CD4-positive, alpha-beta T cell (primary cell): ENCODE measurements at regions of chr5 and their contacts with region 1.

Region 1: DNA sequence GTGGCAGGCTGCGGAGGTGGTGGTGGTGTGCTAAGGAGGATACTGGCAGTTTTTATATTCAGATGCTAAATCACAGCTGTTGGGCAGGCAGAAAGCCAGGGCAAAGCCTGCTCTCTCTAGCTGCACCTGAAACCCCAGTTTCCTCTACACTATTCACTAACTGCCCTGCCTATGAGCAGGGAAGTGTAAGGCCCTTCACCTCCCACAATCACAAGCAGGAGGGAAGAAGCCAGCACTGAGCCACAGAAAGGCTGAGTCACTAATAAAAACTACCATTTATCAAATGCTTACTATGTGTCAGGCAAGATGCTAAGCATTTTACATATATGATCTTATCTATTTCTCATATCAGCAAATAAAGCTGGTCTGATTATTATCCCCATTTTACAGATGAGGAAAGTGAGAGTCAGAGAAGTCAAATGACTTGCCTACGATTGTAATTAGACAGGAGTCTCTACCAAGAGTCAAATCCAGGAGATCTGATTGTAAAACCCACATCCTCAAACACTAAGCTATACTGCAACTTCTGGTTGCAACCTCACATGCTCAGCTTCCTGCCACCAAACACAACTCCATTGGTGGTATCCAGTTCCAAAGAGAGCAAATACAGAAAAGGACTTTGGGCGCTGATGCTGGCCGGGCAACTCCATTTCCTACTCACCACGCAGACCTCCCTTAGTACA is 17.7 kb upstream of the IL6ST start:
- DNase-seq: peak in 8 of 14 experiments; percentile 13 to 82 (median 49)
- ATAC-seq: peak; percentile 94
- H3K4me3 ChIP-seq: no peak overlapping the region
- H3K4me3 Mint-ChIP-seq: peak overlapping the region; percentile 16
- H3K27ac ChIP-seq: peak overlapping the region; percentile 29 to 53
- H3K27ac Mint-ChIP-seq: peak overlapping the region; percentile 75
- H3K4me1 ChIP-seq: peaks cover 33% of the 10 kb centered on the region
- H3K4me1 Mint-ChIP-seq: peaks cover 43% of the 10 kb centered on the region
- H3K27me3 ChIP-seq: no peaks in the 10 kb centered on the region
- H3K27me3 Mint-ChIP-seq: no peaks in the 10 kb centered on the region
- CTCF ChIP-seq: no peak

Region 2: DNA sequence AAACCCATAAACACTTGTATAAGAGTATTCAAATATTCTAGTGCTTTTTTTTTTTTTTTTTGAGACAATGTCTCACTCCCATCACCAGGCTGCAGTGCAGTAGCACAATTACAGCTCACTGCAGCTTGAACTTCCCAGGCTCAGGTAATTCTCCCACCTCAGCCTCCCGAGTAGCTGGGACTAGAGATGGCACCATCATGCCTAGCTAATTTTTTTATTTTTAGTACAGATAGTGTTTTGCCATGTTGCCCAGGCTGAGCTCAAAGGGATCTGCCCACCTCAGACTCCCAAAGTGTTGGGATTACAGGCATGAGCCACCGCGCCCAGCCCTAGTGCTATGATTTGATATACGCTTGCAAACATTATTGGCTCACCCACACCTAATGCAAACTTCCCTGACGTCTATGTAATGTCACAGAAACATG is 29.5 kb before region 1 on chr5:
- CTCF ChIA-PET with region 1: interaction called, 3 read pairs
- POLR2A ChIA-PET with region 1: interaction called, 24 read pairs
- intact Hi-C with region 1: loop called in 1 of 2 experiments (anchors 1 kb)
- DNase-seq: peak in 7 of 14 experiments; percentile 18 to 71 (median 38)
- ATAC-seq: peak; percentile 44
- H3K4me3 ChIP-seq: peak overlapping the region; percentile 11
- H3K4me3 Mint-ChIP-seq: peak overlapping the region; percentile 72
- H3K27ac ChIP-seq: peak overlapping the region in 1 of 2 donors; percentile 10
- H3K27ac Mint-ChIP-seq: peak overlapping the region; percentile 94
- H3K4me1 ChIP-seq: peaks cover 31% of the 10 kb centered on the region
- H3K4me1 Mint-ChIP-seq: peaks cover 90% of the 10 kb centered on the region
- H3K27me3 ChIP-seq: no peaks in the 10 kb centered on the region
- H3K27me3 Mint-ChIP-seq: no peaks in the 10 kb centered on the region
- CTCF ChIP-seq: peak; percentile 66

Region 3: GRCh38 chr5:56024810-56025302 is 12.4 kb after region 1 on chr5:
- CTCF ChIA-PET with region 1: no interaction called
- POLR2A ChIA-PET with region 1: interaction called, 11 read pairs
- intact Hi-C with region 1: no loop called
- DNase-seq: no peak
- ATAC-seq: no peak
- H3K4me3 ChIP-seq: no peak overlapping the region
- H3K4me3 Mint-ChIP-seq: no peak overlapping the region
- H3K27ac ChIP-seq: no peak overlapping the region
- H3K27ac Mint-ChIP-seq: no peak overlapping the region
- H3K4me1 ChIP-seq: peaks cover 2% of the 10 kb centered on the region
- H3K4me1 Mint-ChIP-seq: peaks cover 23% of the 10 kb centered on the region
- H3K27me3 ChIP-seq: no peaks in the 10 kb centered on the region
- H3K27me3 Mint-ChIP-seq: no peaks in the 10 kb centered on the region
- CTCF ChIP-seq: no peak

Region 4: DNA sequence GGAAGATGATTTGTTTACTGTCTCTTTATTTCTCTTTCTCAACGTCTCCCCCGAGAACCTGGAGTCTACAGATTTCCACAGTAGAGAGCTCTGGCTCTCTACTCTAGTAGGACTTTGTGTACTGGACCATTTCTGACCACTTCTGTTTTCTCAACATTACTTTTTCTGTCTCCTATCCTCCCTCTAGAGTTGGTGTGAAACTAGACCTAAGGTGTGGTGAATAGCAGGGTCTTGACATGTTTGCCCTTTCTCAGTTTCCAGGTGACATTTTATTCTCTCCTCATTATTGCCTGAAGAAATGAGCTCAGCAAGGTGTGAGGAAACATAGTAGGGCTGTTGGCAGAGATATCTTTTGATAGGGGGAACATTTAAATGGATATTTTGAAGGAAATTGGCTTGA is 44.5 kb after region 1 on chr5:
- CTCF ChIA-PET with region 1: no interaction called
- POLR2A ChIA-PET with region 1: interaction called, 17 read pairs
- intact Hi-C with region 1: loop called in 1 of 2 experiments (anchors 5 kb)
- DNase-seq: no peak
- ATAC-seq: no peak
- H3K4me3 ChIP-seq: no peak overlapping the region
- H3K4me3 Mint-ChIP-seq: peak overlapping the region; percentile 63
- H3K27ac ChIP-seq: peak overlapping the region; percentile 18 to 35
- H3K27ac Mint-ChIP-seq: peak overlapping the region; percentile 86
- H3K4me1 ChIP-seq: peaks cover 83% of the 10 kb centered on the region
- H3K4me1 Mint-ChIP-seq: peaks cover 74% of the 10 kb centered on the region
- H3K27me3 ChIP-seq: no peaks in the 10 kb centered on the region
- H3K27me3 Mint-ChIP-seq: no peaks in the 10 kb centered on the region
- CTCF ChIP-seq: no peak

Region 5: DNA sequence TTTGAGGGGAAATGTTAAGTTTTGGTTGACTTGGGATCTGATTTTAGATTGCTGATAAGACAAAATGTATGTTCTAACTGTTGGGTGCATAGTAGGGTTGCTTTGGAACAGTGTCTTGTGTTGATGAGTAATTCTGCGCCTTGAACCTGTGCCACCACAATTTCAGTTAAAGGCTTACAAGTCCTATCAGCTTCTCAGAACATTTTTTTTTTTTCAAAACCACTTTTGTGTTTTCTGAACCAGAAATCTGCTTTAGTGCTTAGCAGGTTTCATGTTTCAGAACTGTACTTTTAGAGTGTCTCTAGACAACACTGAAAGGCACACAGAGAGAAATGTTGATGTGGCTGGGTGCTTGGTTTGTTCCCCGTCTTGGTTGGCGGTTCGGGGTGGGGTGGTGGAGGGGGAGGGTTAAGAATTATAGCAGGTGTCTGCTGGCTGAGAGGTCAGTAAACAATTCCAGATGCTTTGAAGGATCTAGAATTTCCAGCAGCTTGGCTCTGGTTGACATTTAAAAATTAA is 136.1 kb after region 1 on chr5:
- CTCF ChIA-PET with region 1: no interaction called
- POLR2A ChIA-PET with region 1: interaction called, 10 read pairs
- intact Hi-C with region 1: no loop called
- DNase-seq: peak in 13 of 14 experiments; percentile 28 to 75 (median 51)
- ATAC-seq: peak; percentile 80
- H3K4me3 ChIP-seq: no peak overlapping the region
- H3K4me3 Mint-ChIP-seq: peak overlapping the region; percentile 62
- H3K27ac ChIP-seq: peak overlapping the region; percentile 42 to 46
- H3K27ac Mint-ChIP-seq: peak overlapping the region; percentile 97
- H3K4me1 ChIP-seq: peaks cover 48% of the 10 kb centered on the region
- H3K4me1 Mint-ChIP-seq: peaks cover 74% of the 10 kb centered on the region
- H3K27me3 ChIP-seq: no peaks in the 10 kb centered on the region
- H3K27me3 Mint-ChIP-seq: no peaks in the 10 kb centered on the region
- CTCF ChIP-seq: no peak